Mammary epithelial cell (primary cell): ENCODE measurements at regions of chr12 and their contacts with region 1.

Region 1: DNA sequence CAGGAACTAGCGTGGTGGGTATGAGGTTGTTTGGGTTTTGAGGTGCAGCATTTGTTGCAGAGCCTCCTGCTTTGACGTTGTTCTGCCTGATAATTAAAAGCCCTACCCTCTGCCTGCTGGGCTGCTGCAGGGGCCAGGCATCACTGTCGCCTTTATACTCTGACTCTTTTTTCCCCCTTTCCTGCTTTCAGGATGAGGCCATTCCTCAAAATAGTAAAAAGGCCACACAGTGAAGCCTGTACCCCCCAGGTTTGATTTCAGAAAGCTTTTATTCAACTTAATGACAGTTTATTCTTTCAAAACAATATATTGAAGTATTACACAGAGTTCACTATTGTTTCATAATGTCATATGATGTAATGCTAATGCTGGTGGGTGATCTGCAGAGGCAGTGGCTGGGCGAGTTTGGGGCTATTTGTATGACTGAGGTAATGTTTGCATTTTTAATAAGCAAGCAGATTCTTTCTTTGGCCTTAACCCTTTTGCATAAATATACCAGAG is 9.1 kb downstream of the BORCS5 start:
- DNase-seq: no peak
- H3K4me3 ChIP-seq: no peak overlapping the region
- H3K27ac ChIP-seq: no peak overlapping the region
- H3K4me1 ChIP-seq: no peaks in the 10 kb centered on the region
- H3K27me3 ChIP-seq: no peaks in the 10 kb centered on the region
- CTCF ChIP-seq: no peak

Region 2: GRCh38 chr12:12716793-12717585 is 351.0 kb after region 1 on chr12 and contains the start of gene CDKN1B:
- CTCF ChIA-PET with region 1: no interaction called
- dilution Hi-C with region 1: no loop called
- in situ Hi-C with region 1: loop called in 1 of 2 experiments (anchors 10 kb)
- intact Hi-C with region 1: no loop called
- DNase-seq: peak; percentile 97
- H3K4me3 ChIP-seq: peak within 1 kb of the TSS; percentile 92 to 95 (median 95)
- H3K27ac ChIP-seq: peak within 1 kb of the TSS; percentile 90
- H3K4me1 ChIP-seq: peaks cover 54% of the 10 kb centered on the region
- H3K27me3 ChIP-seq: no peaks in the 10 kb centered on the region
- CTCF ChIP-seq: no peak
- total RNA-seq, gene CDKN1B: 13.3 to 23.0 TPM